ENCODE measurements at regions of chr15 and their contacts with region 1.

Region 1: DNA sequence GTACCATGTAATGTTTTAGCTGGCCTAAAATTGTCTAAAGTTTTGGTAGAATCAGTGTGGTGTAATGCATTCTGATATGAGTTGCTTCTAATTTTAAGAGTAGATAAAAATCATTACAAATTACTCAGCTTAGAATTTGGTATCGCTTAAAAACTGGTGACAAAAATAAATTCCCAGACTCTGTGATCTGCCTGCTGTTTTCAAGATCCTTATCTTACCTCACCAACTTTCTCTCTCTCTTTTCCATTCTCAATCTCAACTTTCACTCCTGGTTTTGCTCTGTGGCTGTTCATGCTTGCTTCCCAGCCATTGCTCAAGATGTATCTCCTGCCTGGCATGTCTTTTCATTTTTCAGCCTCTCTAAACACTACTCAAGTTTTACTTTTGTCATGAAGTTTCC is 45.7 kb downstream of the TCF12 start:
- DNase-seq: no peak
- ATAC-seq: no peak
- H3K4me3 ChIP-seq: peak overlapping the region; percentile 20
- H3K4me3 Mint-ChIP-seq: peak overlapping the region in 8 of 10 donors; percentile 6 to 88 (median 73)
- H3K27ac ChIP-seq: no peak overlapping the region
- H3K27ac Mint-ChIP-seq: peak overlapping the region in 8 of 9 donors; percentile 39 to 96 (median 79)
- H3K4me1 ChIP-seq: peaks cover 14 to 20% of the 10 kb centered on the region in 2 donors
- H3K4me1 Mint-ChIP-seq: peaks cover 28 to 70% (median 55%) of the 10 kb centered on the region in 7 donors
- H3K27me3 ChIP-seq: no peaks in the 10 kb centered on the region
- H3K27me3 Mint-ChIP-seq: no peaks in the 10 kb centered on the region

Region 2: DNA sequence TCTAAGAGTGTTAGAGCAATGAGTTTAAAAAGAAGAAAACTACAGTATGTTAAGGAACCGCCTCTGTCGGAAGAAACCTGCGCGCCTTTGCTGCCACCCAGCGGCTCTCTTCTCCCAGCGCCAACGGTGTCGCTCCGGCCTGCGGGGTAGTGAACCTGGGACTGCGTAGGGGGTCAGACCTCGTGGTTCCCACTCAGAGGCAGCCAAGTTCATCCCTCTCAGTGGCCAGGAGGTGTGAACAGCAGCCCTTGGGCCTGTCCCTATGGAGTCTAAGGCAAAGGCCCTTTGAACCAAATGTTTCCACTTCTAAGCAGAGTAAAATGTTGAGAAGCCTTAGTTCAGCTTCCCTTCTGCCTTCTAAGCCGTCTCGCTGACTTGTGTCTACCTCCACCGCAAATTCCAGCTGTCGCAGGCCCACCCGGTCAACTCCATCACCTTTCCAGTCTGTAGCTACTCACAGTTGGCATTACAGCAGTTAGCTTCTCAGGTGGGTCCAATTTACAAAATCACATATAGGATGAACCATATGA is 1673.6 kb before region 1 on chr15:
- CTCF ChIA-PET with region 1: no interaction called
- POLR2A ChIA-PET with region 1: no interaction called
- intact Hi-C with region 1: no loop called
- DNase-seq: peak; percentile 72 to 84 (median 80)
- ATAC-seq: peak; percentile 87
- H3K4me3 ChIP-seq: peak overlapping the region; percentile 90
- H3K4me3 Mint-ChIP-seq: peak overlapping the region; percentile 85 to 95 (median 90)
- H3K27ac ChIP-seq: peak overlapping the region; percentile 95
- H3K27ac Mint-ChIP-seq: peak overlapping the region; percentile 87 to 94 (median 92)
- H3K4me1 ChIP-seq: peaks cover 13 to 14% of the 10 kb centered on the region in 2 donors
- H3K4me1 Mint-ChIP-seq: peaks cover 20 to 40% (median 34%) of the 10 kb centered on the region in 7 donors
- H3K27me3 ChIP-seq: no peaks in the 10 kb centered on the region
- H3K27me3 Mint-ChIP-seq: peaks cover 0 to 4% (median 0%) of the 10 kb centered on the region in 5 donors

Region 3: DNA sequence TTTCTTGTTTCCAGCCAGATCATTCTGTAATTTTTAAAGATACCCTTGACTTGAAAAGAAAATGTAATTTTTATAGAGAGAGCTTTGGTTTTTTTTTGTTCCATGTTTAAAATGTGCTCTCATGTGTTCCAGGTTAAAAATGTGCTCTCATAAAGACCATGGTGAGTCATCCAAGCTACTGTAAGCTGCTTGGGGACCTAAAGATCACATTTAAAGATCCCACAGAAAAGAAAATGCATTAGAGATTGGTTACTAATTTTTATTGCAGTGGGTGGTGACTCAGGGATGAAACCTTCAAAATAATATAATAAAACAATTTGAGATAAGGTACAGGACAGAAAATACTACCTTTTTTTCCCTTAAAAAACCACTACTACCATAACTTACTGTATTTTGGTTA is 34.8 kb before region 1 on chr15:
- CTCF ChIA-PET with region 1: no interaction called
- POLR2A ChIA-PET with region 1: no interaction called
- intact Hi-C with region 1: loop called in 1 of 2 experiments (anchors 5 kb)
- DNase-seq: no peak
- ATAC-seq: no peak
- H3K4me3 ChIP-seq: no peak overlapping the region
- H3K4me3 Mint-ChIP-seq: peak overlapping the region in 1 of 10 donors; percentile 54
- H3K27ac ChIP-seq: no peak overlapping the region
- H3K27ac Mint-ChIP-seq: peak overlapping the region in 2 of 9 donors; percentile 37 to 48
- H3K4me1 ChIP-seq: peaks cover 6 to 24% of the 10 kb centered on the region in 2 donors
- H3K4me1 Mint-ChIP-seq: peaks cover 38 to 90% (median 83%) of the 10 kb centered on the region in 7 donors
- H3K27me3 ChIP-seq: no peaks in the 10 kb centered on the region
- H3K27me3 Mint-ChIP-seq: no peaks in the 10 kb centered on the region

Region 4: GRCh38 chr15:56943403-56943802 is 20.8 kb before region 1 on chr15:
- CTCF ChIA-PET with region 1: interaction called, 3 read pairs
- POLR2A ChIA-PET with region 1: no interaction called
- intact Hi-C with region 1: loop called in 1 of 2 experiments (anchors 2 kb)
- DNase-seq: no peak
- ATAC-seq: no peak
- H3K4me3 ChIP-seq: no peak overlapping the region
- H3K4me3 Mint-ChIP-seq: no peak overlapping the region
- H3K27ac ChIP-seq: no peak overlapping the region
- H3K27ac Mint-ChIP-seq: no peak overlapping the region
- H3K4me1 ChIP-seq: peaks cover 0 to 4% of the 10 kb centered on the region in 2 donors
- H3K4me1 Mint-ChIP-seq: peaks cover under 1 to 59% (median 57%) of the 10 kb centered on the region in 7 donors
- H3K27me3 ChIP-seq: no peaks in the 10 kb centered on the region
- H3K27me3 Mint-ChIP-seq: no peaks in the 10 kb centered on the region

Region 5: DNA sequence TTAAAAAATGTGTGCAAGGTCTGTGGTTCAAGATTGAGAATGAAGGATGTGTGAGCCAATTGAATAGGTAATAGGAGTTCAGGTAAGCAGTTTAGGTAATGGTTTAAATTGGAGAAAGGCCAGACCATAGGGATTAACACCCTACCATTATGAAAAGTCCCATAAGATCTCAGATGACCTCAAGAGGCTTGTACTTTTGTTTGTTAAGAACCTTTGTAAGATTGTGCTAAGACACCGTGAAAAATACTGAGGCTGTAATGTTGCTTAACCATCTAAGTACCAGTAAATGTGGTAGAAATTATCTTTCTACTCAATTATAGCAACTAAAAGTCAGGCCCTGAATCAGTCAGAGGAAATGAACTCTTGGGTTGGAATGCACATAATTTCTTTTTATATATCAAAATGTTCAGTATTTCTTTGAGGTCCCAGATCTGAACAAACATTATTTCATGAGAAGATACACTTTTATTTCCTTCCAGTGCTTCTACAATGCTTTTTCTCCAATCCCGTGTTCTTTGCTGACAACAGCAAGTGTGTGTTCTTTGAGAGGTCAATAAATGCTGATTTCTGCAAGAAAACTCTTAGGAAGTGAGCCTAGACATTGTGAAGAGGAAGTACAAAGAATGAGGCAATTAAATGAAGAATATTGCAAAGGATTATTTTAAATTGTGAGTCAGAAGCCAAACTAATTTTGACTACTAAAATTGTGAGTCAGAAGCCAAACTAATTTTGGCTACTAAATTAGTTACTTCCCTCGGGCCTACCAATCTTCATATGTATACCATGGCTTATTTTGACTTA is 20.7 kb after region 1 on chr15:
- CTCF ChIA-PET with region 1: interaction called, 3 read pairs
- POLR2A ChIA-PET with region 1: no interaction called
- intact Hi-C with region 1: loop called in 1 of 2 experiments (anchors 2 kb)
- DNase-seq: no peak
- ATAC-seq: peak; percentile 66
- H3K4me3 ChIP-seq: no peak overlapping the region
- H3K4me3 Mint-ChIP-seq: peak overlapping the region in 3 of 10 donors; percentile 9 to 58 (median 19)
- H3K27ac ChIP-seq: no peak overlapping the region
- H3K27ac Mint-ChIP-seq: peak overlapping the region in 3 of 9 donors; percentile 12 to 49 (median 29)
- H3K4me1 ChIP-seq: peaks cover 3 to 36% of the 10 kb centered on the region in 2 donors
- H3K4me1 Mint-ChIP-seq: peaks cover 32 to 84% (median 65%) of the 10 kb centered on the region in 7 donors
- H3K27me3 ChIP-seq: no peaks in the 10 kb centered on the region
- H3K27me3 Mint-ChIP-seq: no peaks in the 10 kb centered on the region